SK-N-SH (cell line): ENCODE measurements at regions of chr18 and their contacts with region 1.

Region 1: GRCh38 chr18:59402432-59403090 is 43.5 kb upstream of the LMAN1 start:
- DNase-seq: peak; percentile 88
- H3K4me3 ChIP-seq: peak overlapping the region in 1 of 2 experiments; percentile 57; a peak in 1 of 4 replicates
- H3K27ac ChIP-seq: no peak overlapping the region
- H3K4me1 ChIP-seq: no peaks in the 10 kb centered on the region; a peak in 1 of 4 replicates
- H3K27me3 ChIP-seq: no peaks in the 10 kb centered on the region
- CTCF ChIP-seq: peak; percentile 94
- EP300 ChIP-seq: no peak
- RAD21 ChIP-seq: peak; percentile 99

Region 2: GRCh38 chr18:58584200-58585127 is 818.1 kb before region 1 on chr18:
- CTCF ChIA-PET with region 1: no interaction called
- POLR2A ChIA-PET with region 1: no interaction called
- DNase-seq: no peak
- H3K4me3 ChIP-seq: peak overlapping the region in 1 of 2 experiments; percentile 35; a peak in 1 of 4 replicates
- H3K27ac ChIP-seq: peak overlapping the region; percentile 76 to 88
- H3K4me1 ChIP-seq: peaks cover 8 to 35% of the 10 kb centered on the region in 2 experiments; a peak in 3 of 4 replicates
- H3K27me3 ChIP-seq: no peaks in the 10 kb centered on the region
- CTCF ChIP-seq: no peak
- EP300 ChIP-seq: peak in 1 of 2 experiments; percentile 68; a peak in 1 of 4 replicates
- RAD21 ChIP-seq: no peak

Region 3: DNA sequence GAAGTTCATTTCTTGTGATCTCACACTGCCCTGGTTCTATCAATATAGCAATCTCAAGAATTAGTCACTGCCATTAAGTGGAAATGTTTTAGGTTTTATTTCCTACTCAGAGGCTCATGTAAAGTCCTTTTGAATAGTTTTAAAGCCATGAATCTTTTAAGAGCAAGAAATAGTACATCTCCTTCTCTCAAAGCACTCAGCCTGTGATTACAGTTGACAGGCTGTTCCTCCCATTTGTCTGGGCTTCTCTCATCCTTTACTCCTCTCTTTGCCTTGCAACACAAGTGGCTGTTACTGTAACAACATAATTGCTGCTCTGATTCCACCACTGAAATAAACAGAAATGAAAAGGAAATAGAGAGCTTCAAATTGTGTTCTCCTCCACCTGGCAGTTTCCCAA is 164.2 kb before region 1 on chr18:
- CTCF ChIA-PET with region 1: interaction called, 16 read pairs
- POLR2A ChIA-PET with region 1: no interaction called
- DNase-seq: no peak
- H3K4me3 ChIP-seq: no peak overlapping the region
- H3K27ac ChIP-seq: peak overlapping the region in 1 of 2 experiments; percentile 68; a peak in 2 of 4 replicates
- H3K4me1 ChIP-seq: 0 out of 4 replicates have a peak, but pooled peaks cover 0 to 5% of the 10 kb centered on the region in 2 experiments
- H3K27me3 ChIP-seq: no peaks in the 10 kb centered on the region
- CTCF ChIP-seq: no peak
- EP300 ChIP-seq: no peak
- RAD21 ChIP-seq: no peak

Region 4: GRCh38 chr18:59300676-59301285 is 101.8 kb before region 1 on chr18:
- CTCF ChIA-PET with region 1: interaction called, 43 read pairs
- POLR2A ChIA-PET with region 1: no interaction called
- DNase-seq: no peak
- H3K4me3 ChIP-seq: no peak overlapping the region
- H3K27ac ChIP-seq: no peak overlapping the region
- H3K4me1 ChIP-seq: peaks cover 0 to 4% of the 10 kb centered on the region in 2 experiments; a peak in 1 of 4 replicates
- H3K27me3 ChIP-seq: peaks cover 32% of the 10 kb centered on the region; the same call in 1 of the 2 replicates
- CTCF ChIP-seq: no peak
- EP300 ChIP-seq: no peak
- RAD21 ChIP-seq: no peak

Region 5: GRCh38 chr18:59332986-59333385 is 69.6 kb before region 1 on chr18:
- CTCF ChIA-PET with region 1: interaction called, 18 read pairs
- POLR2A ChIA-PET with region 1: no interaction called
- DNase-seq: no peak
- H3K4me3 ChIP-seq: no peak overlapping the region
- H3K27ac ChIP-seq: no peak overlapping the region; a peak in 1 of 4 replicates
- H3K4me1 ChIP-seq: no peaks in the 10 kb centered on the region
- H3K27me3 ChIP-seq: no peaks in the 10 kb centered on the region
- CTCF ChIP-seq: no peak
- EP300 ChIP-seq: no peak
- RAD21 ChIP-seq: no peak

Region 6: GRCh38 chr18:59387687-59388565 is 14.6 kb before region 1 on chr18:
- CTCF ChIA-PET with region 1: interaction called, 24 read pairs
- POLR2A ChIA-PET with region 1: no interaction called
- DNase-seq: no peak
- H3K4me3 ChIP-seq: no peak overlapping the region
- H3K27ac ChIP-seq: no peak overlapping the region
- H3K4me1 ChIP-seq: no peaks in the 10 kb centered on the region; a peak in 2 of 4 replicates
- H3K27me3 ChIP-seq: 0 out of 2 replicates have a peak, but pooled peaks cover 6% of the 10 kb centered on the region
- CTCF ChIP-seq: no peak
- EP300 ChIP-seq: no peak
- RAD21 ChIP-seq: no peak

Region 7: GRCh38 chr18:59459369-59460079 is 57.0 kb after region 1 on chr18:
- CTCF ChIA-PET with region 1: interaction called, 22 read pairs
- POLR2A ChIA-PET with region 1: no interaction called
- DNase-seq: peak; percentile 45
- H3K4me3 ChIP-seq: no peak overlapping the region
- H3K27ac ChIP-seq: peak overlapping the region; percentile 14 to 67; a peak in 3 of 4 replicates
- H3K4me1 ChIP-seq: peaks cover 10 to 31% of the 10 kb centered on the region in 2 experiments; a peak in 3 of 4 replicates
- H3K27me3 ChIP-seq: no peaks in the 10 kb centered on the region
- CTCF ChIP-seq: peak; percentile 75
- EP300 ChIP-seq: 0 out of 4 replicates have a peak, but pooled peaks of 1 of the 2 experiments have one; percentile 16
- RAD21 ChIP-seq: peak; percentile 94

Region 8: GRCh38 chr18:59566533-59566971 is 164.0 kb after region 1 on chr18:
- CTCF ChIA-PET with region 1: no interaction called
- POLR2A ChIA-PET with region 1: no interaction called
- DNase-seq: no peak
- H3K4me3 ChIP-seq: no peak overlapping the region
- H3K27ac ChIP-seq: no peak overlapping the region
- H3K4me1 ChIP-seq: peaks cover 0 to 28% of the 10 kb centered on the region in 2 experiments; a peak in 1 of 4 replicates
- H3K27me3 ChIP-seq: no peaks in the 10 kb centered on the region
- CTCF ChIP-seq: no peak
- EP300 ChIP-seq: no peak
- RAD21 ChIP-seq: no peak

Region 9: GRCh38 chr18:59646228-59646962 is 243.8 kb after region 1 on chr18:
- CTCF ChIA-PET with region 1: no interaction called
- POLR2A ChIA-PET with region 1: no interaction called
- DNase-seq: no peak
- H3K4me3 ChIP-seq: no peak overlapping the region
- H3K27ac ChIP-seq: no peak overlapping the region
- H3K4me1 ChIP-seq: no peaks in the 10 kb centered on the region
- H3K27me3 ChIP-seq: no peaks in the 10 kb centered on the region
- CTCF ChIP-seq: 0 out of 2 replicates have a peak, but pooled peaks have one; percentile 16
- EP300 ChIP-seq: no peak
- RAD21 ChIP-seq: no peak